SK-N-SH (cell line): ENCODE measurements at regions of chr7 and their contacts with region 1.

Region 1: DNA sequence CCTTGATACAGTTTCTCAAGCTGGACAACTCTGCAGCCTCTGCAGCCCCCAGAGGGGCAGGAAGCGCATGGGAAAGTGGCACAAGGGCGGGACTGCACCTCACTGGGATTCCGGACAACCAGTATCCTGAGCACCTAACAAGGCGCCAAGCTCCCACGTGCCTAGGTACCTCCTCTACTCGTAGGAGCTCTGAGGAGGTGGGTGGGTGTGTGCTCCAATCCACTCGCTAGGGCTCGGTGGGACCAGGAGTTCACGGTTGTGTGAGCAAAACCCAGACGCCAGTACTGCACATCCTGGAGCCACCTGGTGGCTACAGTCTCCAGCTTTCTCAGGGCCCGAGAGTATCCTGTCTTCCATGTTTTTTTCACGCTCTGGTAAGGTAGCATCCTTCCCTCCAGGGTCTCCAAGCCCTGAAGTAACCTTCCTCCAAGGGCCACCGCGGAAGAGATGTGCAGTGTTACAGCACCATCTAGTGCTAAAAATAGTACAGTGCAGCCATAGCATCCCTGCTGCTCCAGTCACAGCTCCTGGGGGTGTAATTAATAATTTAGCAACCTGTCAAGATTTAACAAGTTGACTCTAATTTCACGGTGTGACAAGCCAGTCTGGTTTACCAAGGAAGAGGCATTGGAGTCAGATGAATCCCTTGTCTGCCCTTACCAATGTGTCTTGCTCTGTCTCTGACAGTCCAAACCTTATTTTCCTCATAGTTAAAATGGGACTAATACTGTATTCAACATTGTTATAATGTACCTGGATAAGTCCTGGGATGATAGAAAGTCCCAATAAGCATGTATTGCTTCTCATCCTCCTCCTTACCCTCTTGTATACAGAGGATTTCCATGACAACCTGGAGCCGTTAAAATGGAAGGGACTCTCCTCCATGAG is 70.4 kb downstream of the HERPUD2 start:
- DNase-seq: peak; percentile 76
- H3K4me3 ChIP-seq: no peak overlapping the region; a peak in 1 of 4 replicates
- H3K27ac ChIP-seq: no peak overlapping the region
- H3K4me1 ChIP-seq: peaks cover 0 to 4% of the 10 kb centered on the region in 2 experiments; a peak in 1 of 4 replicates
- H3K27me3 ChIP-seq: no peaks in the 10 kb centered on the region
- CTCF ChIP-seq: peak; percentile 99
- EP300 ChIP-seq: no peak
- RAD21 ChIP-seq: peak; percentile 94

Region 2: DNA sequence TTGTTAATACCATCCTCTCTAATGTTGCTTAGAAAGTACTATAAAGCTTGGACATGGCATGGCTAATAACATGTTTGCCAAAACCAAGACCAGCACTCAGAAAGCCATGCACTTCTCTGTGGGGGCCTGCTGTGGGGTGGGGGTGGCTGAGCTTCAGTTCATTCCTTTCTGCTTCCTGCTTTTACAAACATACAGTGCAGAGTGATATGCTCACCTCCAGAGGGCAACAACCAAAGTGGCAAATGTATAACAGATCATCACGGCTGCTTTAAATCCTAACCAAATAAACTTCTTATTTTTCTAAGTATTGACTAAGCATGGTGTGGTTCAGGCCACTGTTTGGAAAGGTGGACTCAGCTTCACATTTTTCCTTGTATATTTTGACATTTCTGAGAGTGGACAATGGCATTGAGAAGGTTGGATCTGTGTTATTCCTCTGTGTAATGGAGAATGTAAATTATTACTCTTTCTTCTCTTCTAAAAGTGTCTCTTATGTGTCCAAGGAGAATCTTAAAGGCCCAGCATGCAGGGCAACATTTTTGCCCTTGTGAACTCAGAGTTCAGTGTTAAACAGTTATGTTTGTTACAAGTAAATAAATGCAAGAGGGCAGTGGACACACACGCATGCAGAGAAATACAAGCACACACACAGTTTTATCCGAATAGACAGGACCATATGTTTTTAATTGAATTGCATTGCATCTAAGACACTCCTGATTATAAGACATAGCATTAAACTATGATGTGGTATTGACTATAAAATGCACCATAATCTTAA is 115.7 kb before region 1 on chr7:
- CTCF ChIA-PET with region 1: interaction called, 24 read pairs
- POLR2A ChIA-PET with region 1: no interaction called
- DNase-seq: no peak
- H3K4me3 ChIP-seq: no peak overlapping the region
- H3K27ac ChIP-seq: no peak overlapping the region
- H3K4me1 ChIP-seq: peaks cover 2 to 5% of the 10 kb centered on the region in 2 experiments; a peak in 2 of 4 replicates
- H3K27me3 ChIP-seq: no peaks in the 10 kb centered on the region
- CTCF ChIP-seq: peak; percentile 37
- EP300 ChIP-seq: no peak
- RAD21 ChIP-seq: peak; percentile 28; the same call in 1 of the 2 replicates

Region 3: DNA sequence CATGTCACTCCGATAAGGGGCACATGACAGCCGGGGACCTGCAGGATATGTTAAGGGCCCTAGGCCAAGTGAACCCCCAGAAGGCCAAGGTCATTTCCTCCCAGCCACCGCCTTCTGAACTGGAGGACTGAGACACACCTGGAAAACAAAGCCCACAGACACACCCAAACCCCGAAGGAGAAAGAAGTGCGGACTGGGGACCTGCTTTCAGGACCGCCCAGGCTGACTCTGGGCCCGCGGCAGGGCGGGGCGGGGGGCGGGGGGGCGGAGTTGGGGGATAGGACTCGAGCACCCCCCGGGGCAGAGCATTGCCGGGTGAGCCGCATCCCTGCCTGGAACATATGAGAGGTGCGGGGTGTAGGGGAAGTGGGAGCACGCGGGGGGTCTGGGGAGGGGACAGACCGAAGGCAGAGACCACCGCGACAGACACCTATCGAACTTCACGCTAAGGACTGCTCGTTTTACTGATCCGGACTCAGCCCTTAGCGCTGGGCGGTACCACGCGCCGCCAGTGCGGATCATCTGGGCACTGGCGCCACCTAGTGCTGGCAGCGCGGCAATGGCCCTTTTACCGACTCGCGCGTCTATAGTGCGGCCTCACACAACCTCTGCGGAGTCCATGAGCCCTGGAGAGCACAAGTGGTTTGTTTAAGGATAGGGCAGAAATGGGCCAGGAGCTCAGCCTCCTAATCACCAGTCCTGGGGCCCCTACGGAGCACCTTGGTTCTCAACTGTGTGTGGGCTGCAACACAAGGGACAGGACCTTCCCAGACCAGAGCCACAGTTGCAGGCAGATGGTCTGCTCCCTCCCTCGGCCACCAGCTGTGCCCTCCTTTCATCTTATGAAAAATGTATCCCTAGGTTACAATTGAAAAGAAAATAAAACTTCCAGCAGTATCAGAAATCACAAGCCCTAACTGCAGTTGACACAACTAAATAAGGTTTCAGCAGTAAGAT is 87.2 kb before region 1 on chr7:
- CTCF ChIA-PET with region 1: interaction called, 36 read pairs
- POLR2A ChIA-PET with region 1: no interaction called
- DNase-seq: peak; percentile 92
- H3K4me3 ChIP-seq: peak overlapping the region; percentile 37 to 65
- H3K27ac ChIP-seq: no peak overlapping the region
- H3K4me1 ChIP-seq: peaks cover 0 to 2% of the 10 kb centered on the region in 2 experiments; a peak in 1 of 4 replicates
- H3K27me3 ChIP-seq: peaks cover 13% of the 10 kb centered on the region
- CTCF ChIP-seq: peak; percentile 99
- EP300 ChIP-seq: no peak
- RAD21 ChIP-seq: peak; percentile 98

Region 4: GRCh38 chr7:35584990-35585389 is 39.6 kb before region 1 on chr7:
- CTCF ChIA-PET with region 1: interaction called, 54 read pairs
- POLR2A ChIA-PET with region 1: no interaction called
- DNase-seq: no peak
- H3K4me3 ChIP-seq: no peak overlapping the region
- H3K27ac ChIP-seq: no peak overlapping the region
- H3K4me1 ChIP-seq: peaks cover 0 to 8% of the 10 kb centered on the region in 2 experiments; a peak in 2 of 4 replicates
- H3K27me3 ChIP-seq: no peaks in the 10 kb centered on the region
- CTCF ChIP-seq: no peak
- EP300 ChIP-seq: no peak
- RAD21 ChIP-seq: no peak

Region 5: GRCh38 chr7:35646289-35647023 is 21.9 kb after region 1 on chr7:
- CTCF ChIA-PET with region 1: interaction called, 74 read pairs
- POLR2A ChIA-PET with region 1: no interaction called
- DNase-seq: no peak
- H3K4me3 ChIP-seq: no peak overlapping the region
- H3K27ac ChIP-seq: no peak overlapping the region
- H3K4me1 ChIP-seq: peaks cover 0 to 4% of the 10 kb centered on the region in 2 experiments; a peak in 3 of 4 replicates
- H3K27me3 ChIP-seq: no peaks in the 10 kb centered on the region
- CTCF ChIP-seq: no peak
- EP300 ChIP-seq: no peak
- RAD21 ChIP-seq: no peak

Region 6: DNA sequence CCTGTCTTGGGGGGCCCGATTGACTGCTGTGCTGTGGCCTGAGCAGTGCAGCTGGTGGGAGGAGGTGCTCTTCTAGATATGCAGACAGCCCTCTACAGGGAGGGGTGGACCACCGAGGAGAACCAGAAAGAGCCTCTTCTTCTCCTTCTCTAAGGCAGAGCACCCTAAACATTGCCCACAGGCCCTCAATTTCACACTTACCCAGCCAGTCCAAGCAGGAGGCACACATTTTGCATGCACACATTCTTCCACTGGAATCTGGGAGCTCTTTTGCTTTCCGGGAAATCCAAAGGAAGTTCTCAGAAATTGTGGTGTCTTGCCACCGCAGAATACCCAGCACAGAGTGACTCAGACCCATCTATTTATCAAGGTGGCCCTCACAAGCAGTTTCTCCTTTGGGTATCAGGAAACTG is 574.3 kb after region 1 on chr7:
- CTCF ChIA-PET with region 1: no interaction called
- POLR2A ChIA-PET with region 1: no interaction called
- DNase-seq: no peak
- H3K4me3 ChIP-seq: no peak overlapping the region
- H3K27ac ChIP-seq: no peak overlapping the region
- H3K4me1 ChIP-seq: peaks cover 0 to 22% of the 10 kb centered on the region in 2 experiments; a peak in 3 of 4 replicates
- H3K27me3 ChIP-seq: no peaks in the 10 kb centered on the region
- CTCF ChIP-seq: no peak
- EP300 ChIP-seq: no peak
- RAD21 ChIP-seq: no peak